ENCODE measurements at regions of chr5 and their contacts with region 1.

Region 1: DNA sequence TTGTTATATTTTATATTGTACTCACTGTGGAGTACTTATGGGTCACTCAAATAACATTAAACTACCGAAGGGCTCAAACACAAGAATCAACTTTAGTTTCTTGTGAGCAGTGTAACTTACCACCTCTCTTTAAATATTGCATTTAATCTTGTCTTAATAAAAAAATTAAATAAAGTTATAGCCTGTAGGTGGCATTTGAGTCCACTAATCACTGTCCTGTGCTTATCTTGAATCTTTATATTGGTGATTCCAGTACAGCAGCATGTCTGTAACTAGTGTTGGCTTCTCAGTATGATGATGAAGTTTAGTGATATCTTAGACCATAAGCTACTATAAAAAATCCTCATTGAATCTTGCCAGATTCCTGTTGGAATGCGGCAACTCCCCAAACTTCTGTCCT is 313.8 kb downstream of the FAM170A start:
- DNase-seq: no peak
- H3K4me3 ChIP-seq: no peak overlapping the region
- H3K27ac ChIP-seq: no peak overlapping the region
- H3K4me1 ChIP-seq: no peaks in the 10 kb centered on the region
- H3K27me3 ChIP-seq: no peaks in the 10 kb centered on the region
- CTCF ChIP-seq: peak in 1 of 2 donors; percentile 39

Region 2: DNA sequence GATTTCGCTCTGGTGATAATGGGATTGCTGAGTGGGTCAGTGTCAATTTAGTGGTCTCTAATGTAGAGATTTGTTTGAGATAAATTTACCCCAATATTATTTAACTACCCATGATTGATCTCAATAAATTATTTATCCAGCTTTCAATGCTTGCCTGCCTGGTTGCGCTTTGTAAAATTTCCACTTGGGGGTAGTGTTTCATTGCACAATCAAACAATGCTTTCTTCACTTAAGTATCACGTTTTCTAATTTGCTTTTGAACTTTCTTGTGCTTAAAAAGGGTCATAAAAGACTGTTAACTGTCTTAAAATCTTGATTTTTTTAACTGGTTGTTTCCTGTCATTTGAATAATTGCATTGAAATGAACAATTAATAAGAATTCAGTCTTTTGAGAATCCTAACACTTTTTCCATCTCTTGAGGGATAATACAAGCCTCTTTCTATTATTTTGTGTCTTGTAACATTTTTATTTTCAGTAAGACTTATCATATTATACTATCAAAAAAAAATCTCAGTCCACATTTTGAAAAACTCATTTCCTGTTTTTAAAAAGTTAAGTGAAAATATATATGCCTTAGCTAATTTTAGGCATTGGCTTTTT is 472.2 kb before region 1 on chr5:
- CTCF ChIA-PET with region 1: no interaction called
- dilution Hi-C with region 1: no loop called
- in situ Hi-C with region 1: no loop called
- intact Hi-C with region 1: loop called (anchors 5 kb)
- DNase-seq: peak; percentile 19
- H3K4me3 ChIP-seq: no peak overlapping the region
- H3K27ac ChIP-seq: no peak overlapping the region
- H3K4me1 ChIP-seq: no peaks in the 10 kb centered on the region
- H3K27me3 ChIP-seq: no peaks in the 10 kb centered on the region
- CTCF ChIP-seq: peak; percentile 61 to 67

Region 3: DNA sequence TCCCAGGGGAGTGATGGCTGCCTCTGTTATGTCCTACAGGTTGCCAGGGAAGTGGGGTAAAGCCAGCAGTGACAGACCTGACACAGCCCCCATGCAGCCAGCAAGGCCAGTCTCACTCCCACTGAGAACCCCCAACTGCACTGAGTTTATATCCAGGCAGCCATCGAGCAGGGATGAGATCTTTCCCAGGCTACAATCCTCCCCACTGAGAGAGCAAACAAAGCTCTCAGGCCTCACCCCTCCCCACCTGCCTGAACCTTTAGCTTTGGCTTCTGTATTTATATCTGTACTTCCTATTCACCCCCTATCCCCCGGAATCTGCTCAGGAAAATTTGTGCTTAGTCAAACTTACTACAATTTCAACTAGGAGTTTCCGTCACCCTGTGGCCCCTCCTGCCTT is 29.7 kb before region 1 on chr5:
- CTCF ChIA-PET with region 1: no interaction called
- dilution Hi-C with region 1: no loop called
- in situ Hi-C with region 1: no loop called
- intact Hi-C with region 1: no loop called
- DNase-seq: no peak
- H3K4me3 ChIP-seq: no peak overlapping the region
- H3K27ac ChIP-seq: no peak overlapping the region
- H3K4me1 ChIP-seq: no peaks in the 10 kb centered on the region
- H3K27me3 ChIP-seq: no peaks in the 10 kb centered on the region
- CTCF ChIP-seq: no peak

Region 4: DNA sequence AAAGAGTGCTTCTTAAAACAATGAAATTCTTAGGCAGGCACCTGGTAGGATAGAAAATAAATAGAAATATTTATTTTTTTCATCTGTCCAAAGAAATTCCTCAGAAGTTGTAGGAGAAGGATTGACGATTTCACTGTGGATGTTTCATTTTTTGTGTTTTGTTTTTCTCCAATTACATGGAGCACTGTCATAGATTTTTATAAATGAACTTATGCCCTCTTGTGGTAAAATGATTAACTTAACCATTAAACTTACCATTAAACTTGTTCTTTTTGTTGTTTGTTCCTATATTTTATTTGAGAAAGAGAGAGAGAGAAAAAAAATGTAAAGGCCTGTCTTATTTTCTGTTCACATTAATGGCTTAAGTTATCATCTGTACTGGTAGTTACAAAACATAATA is 860.1 kb after region 1 on chr5:
- CTCF ChIA-PET with region 1: no interaction called
- dilution Hi-C with region 1: no loop called
- in situ Hi-C with region 1: no loop called
- intact Hi-C with region 1: loop called (anchors 5 kb)
- DNase-seq: peak; percentile 2
- H3K4me3 ChIP-seq: no peak overlapping the region
- H3K27ac ChIP-seq: no peak overlapping the region
- H3K4me1 ChIP-seq: no peaks in the 10 kb centered on the region
- H3K27me3 ChIP-seq: peaks cover 2% of the 10 kb centered on the region
- CTCF ChIP-seq: peak in 1 of 2 donors; percentile 29

Measured in mammary epithelial cell (primary cell).